Transverse colon (tissue), 4 donors: ENCODE measurements at regions of chr14 and their contacts with region 1.

Region 1: GRCh38 chr14:101235335-101236103 is 325.8 kb upstream of the DIO3 start:
- DNase-seq: peak; percentile 65
- H3K4me3 ChIP-seq: no peak overlapping the region
- H3K27ac ChIP-seq: no peak overlapping the region
- H3K4me1 ChIP-seq: no peaks in the 10 kb centered on the region
- H3K27me3 ChIP-seq: no peaks in the 10 kb centered on the region
- CTCF ChIP-seq: peak; percentile 64 to 78 (median 68)
- EP300 ChIP-seq: no peak
- POLR2A ChIP-seq: no peak

Region 2: GRCh38 chr14:100850841-100851585 is 384.5 kb before region 1 on chr14:
- in situ Hi-C with region 1: loop called in 1 of 4 experiments (anchors 25 kb)
- intact Hi-C with region 1: loop called (anchors 10 kb)
- DNase-seq: peak; percentile 92
- H3K4me3 ChIP-seq: no peak overlapping the region
- H3K27ac ChIP-seq: no peak overlapping the region
- H3K4me1 ChIP-seq: peaks cover 0 to 8% (median 0%) of the 10 kb centered on the region in 4 donors
- H3K27me3 ChIP-seq: no peaks in the 10 kb centered on the region
- CTCF ChIP-seq: peak; percentile 82 to 94 (median 91)
- EP300 ChIP-seq: no peak
- POLR2A ChIP-seq: no peak